ENCODE measurements at regions of chr7 and their contacts with region 1.

Region 1: GRCh38 chr7:73851410-73852234 is 9.3 kb upstream of the METTL27 start:
- ATAC-seq: peak; percentile 63 to 93 (median 83)
- H3K4me3 ChIP-seq: no peak overlapping the region
- H3K27ac ChIP-seq: no peak overlapping the region
- H3K4me1 ChIP-seq: no peaks in the 10 kb centered on the region

Region 2: GRCh38 chr7:74173866-74174605 is 322.4 kb after region 1 on chr7 and contains the start of gene EIF4H:
- in situ Hi-C with region 1: loop called in 1 of 9 experiments (anchors 25 kb)
- ATAC-seq: peak; percentile 90 to 97 (median 96)
- H3K4me3 ChIP-seq: peak within 1 kb of the TSS; percentile 75 to 91 (median 88)
- H3K27ac ChIP-seq: peak within 1 kb of the TSS; percentile 94 to 99
- H3K4me1 ChIP-seq: peaks cover 24 to 37% of the 10 kb centered on the region in 2 donors
- total RNA-seq, gene EIF4H: 203 to 351 (median 241) TPM

Region 3: DNA sequence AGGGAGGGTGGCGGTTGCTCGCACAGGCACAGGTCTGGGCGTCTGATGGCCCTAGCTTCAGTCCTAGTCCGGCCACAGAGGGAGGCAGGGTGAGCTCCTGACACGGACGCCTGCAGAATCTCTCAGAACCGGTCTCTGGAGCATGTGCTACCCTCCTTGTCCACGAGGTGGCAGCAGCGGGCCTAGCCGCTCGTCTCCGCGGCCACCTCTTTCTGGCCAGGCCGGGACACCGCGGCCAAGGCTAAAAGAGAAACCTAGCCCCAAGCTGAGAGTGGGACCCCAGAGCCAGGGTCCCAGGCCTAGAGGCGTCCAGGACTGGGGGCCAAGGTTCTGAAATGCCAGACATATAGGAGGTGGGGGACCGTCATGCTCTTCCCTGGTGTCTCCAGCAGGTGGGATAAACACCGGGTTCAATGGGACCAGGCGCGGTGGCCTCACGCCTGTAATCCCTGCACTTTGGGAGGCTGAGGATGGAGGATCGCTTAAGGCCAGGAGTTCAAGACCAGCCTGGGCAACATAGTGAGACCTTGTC is 355.0 kb after region 1 on chr7:
- in situ Hi-C with region 1: loop called in 1 of 9 experiments (anchors 25 kb)
- ATAC-seq: peak; percentile 83 to 95 (median 85)
- H3K4me3 ChIP-seq: no peak overlapping the region
- H3K27ac ChIP-seq: no peak overlapping the region
- H3K4me1 ChIP-seq: no peaks in the 10 kb centered on the region